H1 (cell line): ENCODE measurements at regions of chr1 and their contacts with region 1.

Region 1: GRCh38 chr1:27416387-27417111 is 24.1 kb downstream of the GPR3 start:
- DNase-seq: no peak
- H3K4me3 ChIP-seq: no peak overlapping the region
- H3K27ac ChIP-seq: no peak overlapping the region
- H3K4me1 ChIP-seq: peaks cover 5 to 12% (median 9%) of the 10 kb centered on the region in 4 experiments; a peak in 6 of 7 replicates
- H3K27me3 ChIP-seq: no peaks in the 10 kb centered on the region
- CTCF ChIP-seq: peak; percentile 46 to 90 (median 79)
- EP300 ChIP-seq: no peak
- POLR2A ChIP-seq: no peak
- RAD21 ChIP-seq: peak; percentile 70 to 80

Region 2: GRCh38 chr1:27306892-27307761 is 109.4 kb before region 1 on chr1:
- CTCF ChIA-PET with region 1: no interaction called
- POLR2A ChIA-PET with region 1: no interaction called
- DNase-seq: peak in 1 of 2 experiments; percentile 76
- H3K4me3 ChIP-seq: peak overlapping the region in 2 of 4 experiments; percentile 23 to 39; a peak in 4 of 8 replicates
- H3K27ac ChIP-seq: peak overlapping the region; percentile 57; the same call in 1 of the 2 replicates
- H3K4me1 ChIP-seq: peaks cover 11 to 15% (median 13%) of the 10 kb centered on the region in 4 experiments
- H3K27me3 ChIP-seq: no peaks in the 10 kb centered on the region
- CTCF ChIP-seq: peak; percentile 33 to 57 (median 41)
- EP300 ChIP-seq: no peak
- POLR2A ChIP-seq: 0 out of 3 replicates have a peak, but pooled peaks of 1 of the 2 experiments have one; percentile 28
- RAD21 ChIP-seq: 0 out of 4 replicates have a peak, but pooled peaks of 1 of the 2 experiments have one; percentile 12

Region 3: GRCh38 chr1:27430903-27431600 is 14.5 kb after region 1 on chr1:
- CTCF ChIA-PET with region 1: interaction called, 50 read pairs
- POLR2A ChIA-PET with region 1: interaction called, 10 read pairs
- DNase-seq: no peak
- H3K4me3 ChIP-seq: no peak overlapping the region
- H3K27ac ChIP-seq: peak overlapping the region; percentile 25; the same call in 1 of the 2 replicates
- H3K4me1 ChIP-seq: peaks cover 14 to 29% (median 22%) of the 10 kb centered on the region in 4 experiments
- H3K27me3 ChIP-seq: no peaks in the 10 kb centered on the region
- CTCF ChIP-seq: no peak
- EP300 ChIP-seq: no peak
- POLR2A ChIP-seq: no peak
- RAD21 ChIP-seq: no peak